ENCODE measurements at regions of chr14 and their contacts with region 1.

Region 1: DNA sequence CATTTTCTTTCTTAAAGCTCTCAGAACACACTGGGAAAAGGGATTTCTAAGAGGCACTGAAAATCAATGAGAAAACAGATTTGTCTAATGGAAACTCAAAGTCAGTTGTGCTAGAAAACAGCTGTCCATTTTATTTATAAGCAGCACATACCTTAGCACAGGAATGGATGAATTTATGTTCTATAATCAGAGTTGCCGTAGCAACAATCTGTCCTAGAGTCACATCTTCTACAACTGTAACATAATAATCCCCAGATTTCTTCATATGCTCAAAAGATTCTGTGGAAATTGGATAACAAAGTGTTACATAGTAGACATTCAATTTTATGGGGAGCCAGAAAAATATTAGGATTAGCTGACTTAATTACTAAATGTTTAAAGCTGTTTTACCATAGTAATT is 9.8 kb downstream of the GNPNAT1 start:
- DNase-seq: no peak
- ATAC-seq: no peak
- H3K4me3 ChIP-seq: no peak overlapping the region
- H3K4me3 Mint-ChIP-seq: no peak overlapping the region
- H3K27ac ChIP-seq: no peak overlapping the region
- H3K27ac Mint-ChIP-seq: peak overlapping the region in 1 of 2 donors; percentile 61
- H3K4me1 ChIP-seq: no peaks in the 10 kb centered on the region
- H3K4me1 Mint-ChIP-seq: peaks cover 0 to 2% (median 2%) of the 10 kb centered on the region in 3 donors
- H3K27me3 ChIP-seq: no peaks in the 10 kb centered on the region
- H3K27me3 Mint-ChIP-seq: no peaks in the 10 kb centered on the region

Region 2: GRCh38 chr14:52080817-52081755 is 700.5 kb before region 1 on chr14:
- CTCF ChIA-PET with region 1: no interaction called
- POLR2A ChIA-PET with region 1: no interaction called
- DNase-seq: no peak
- ATAC-seq: no peak
- H3K4me3 ChIP-seq: no peak overlapping the region
- H3K4me3 Mint-ChIP-seq: no peak overlapping the region
- H3K27ac ChIP-seq: no peak overlapping the region
- H3K27ac Mint-ChIP-seq: no peak overlapping the region
- H3K4me1 ChIP-seq: no peaks in the 10 kb centered on the region
- H3K4me1 Mint-ChIP-seq: no peaks in the 10 kb centered on the region
- H3K27me3 ChIP-seq: no peaks in the 10 kb centered on the region
- H3K27me3 Mint-ChIP-seq: peaks cover 9 to 19% of the 10 kb centered on the region in 2 donors

Region 3: GRCh38 chr14:52307905-52308304 is 473.7 kb before region 1 on chr14:
- CTCF ChIA-PET with region 1: interaction called in 1 of 2 experiments, 10 read pairs
- POLR2A ChIA-PET with region 1: no interaction called
- DNase-seq: no peak
- ATAC-seq: no peak
- H3K4me3 ChIP-seq: no peak overlapping the region
- H3K4me3 Mint-ChIP-seq: no peak overlapping the region
- H3K27ac ChIP-seq: no peak overlapping the region
- H3K27ac Mint-ChIP-seq: peak overlapping the region; percentile 77 to 80
- H3K4me1 ChIP-seq: peaks cover 0 to 28% of the 10 kb centered on the region in 2 experiments
- H3K4me1 Mint-ChIP-seq: peaks cover 49 to 80% (median 63%) of the 10 kb centered on the region in 3 donors
- H3K27me3 ChIP-seq: no peaks in the 10 kb centered on the region
- H3K27me3 Mint-ChIP-seq: no peaks in the 10 kb centered on the region

Measured in T-cell (primary cell).